ENCODE measurements at regions of chr2 and their contacts with region 1.

Region 1: GRCh38 chr2:44543773-44544725 is 182.3 kb downstream of the CAMKMT start:
- DNase-seq: no peak
- H3K4me3 ChIP-seq: no peak overlapping the region
- CTCF ChIP-seq: no peak

Region 2: DNA sequence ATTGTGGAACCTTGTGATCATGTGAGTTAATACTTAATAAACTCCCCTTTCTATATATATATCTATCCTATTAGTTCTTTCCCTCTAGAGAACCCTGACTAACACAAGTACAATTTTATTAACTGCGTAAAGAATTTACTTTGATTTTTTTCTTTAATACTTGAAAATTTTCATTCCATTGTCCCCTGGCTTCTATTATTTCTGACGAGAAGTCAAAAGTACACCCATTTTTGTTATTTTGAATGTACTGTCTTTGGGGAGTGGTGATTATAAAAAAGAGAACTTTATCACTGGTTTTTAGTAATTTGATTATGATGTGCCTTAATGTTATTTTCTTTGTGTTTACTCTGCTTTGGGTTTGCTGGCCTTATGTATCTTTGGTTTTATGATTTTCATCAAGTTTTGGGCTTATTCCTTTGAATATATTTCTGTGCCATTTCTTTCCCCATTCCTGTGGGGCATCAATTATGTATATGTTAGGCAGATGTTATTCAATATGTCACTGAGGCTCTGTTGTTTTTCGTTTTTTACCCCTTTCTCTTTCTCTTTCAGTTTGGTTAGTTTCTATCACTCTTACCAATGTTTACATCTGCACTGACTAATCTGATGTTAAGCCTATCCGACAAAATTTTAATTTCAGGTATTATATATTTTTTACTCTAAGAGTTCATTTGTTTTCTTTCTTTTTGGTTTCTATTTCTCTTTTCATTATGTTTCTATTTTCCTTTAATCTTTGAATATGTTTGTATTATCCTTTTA is 89.1 kb after region 1 on chr2:
- in situ Hi-C with region 1: loop called (anchors 5 kb)
- DNase-seq: no peak
- H3K4me3 ChIP-seq: no peak overlapping the region
- CTCF ChIP-seq: no peak

Measured in astrocyte of the cerebellum (primary cell).